ENCODE measurements at regions of chr3 and their contacts with region 1.

Region 1: GRCh38 chr3:109532257-109533216 is 195.2 kb upstream of the DPPA4 start:
- DNase-seq: peak; percentile 67
- H3K4me3 Mint-ChIP-seq: no peak overlapping the region
- H3K27ac Mint-ChIP-seq: no peak overlapping the region
- H3K4me1 Mint-ChIP-seq: no peaks in the 10 kb centered on the region
- H3K27me3 Mint-ChIP-seq: peaks cover 5% of the 10 kb centered on the region

Region 2: GRCh38 chr3:111080413-111080812 is 1547.9 kb after region 1 on chr3:
- CTCF ChIA-PET with region 1: no interaction called
- intact Hi-C with region 1: loop called (anchors 2 kb)
- DNase-seq: no peak
- H3K4me3 Mint-ChIP-seq: no peak overlapping the region
- H3K27ac Mint-ChIP-seq: no peak overlapping the region
- H3K4me1 Mint-ChIP-seq: no peaks in the 10 kb centered on the region
- H3K27me3 Mint-ChIP-seq: peaks cover 2% of the 10 kb centered on the region